Mammary epithelial cell (primary cell): ENCODE measurements at regions of chr1 and their contacts with region 1.

Region 1: GRCh38 chr1:41003640-41004220 is 17.8 kb downstream of the SLFNL1 start:
- DNase-seq: peak; percentile 97
- H3K4me3 ChIP-seq: no peak overlapping the region
- H3K27ac ChIP-seq: peak overlapping the region; percentile 38
- H3K4me1 ChIP-seq: peaks cover 49% of the 10 kb centered on the region
- H3K27me3 ChIP-seq: no peaks in the 10 kb centered on the region
- CTCF ChIP-seq: peak; percentile 57 to 74

Region 2: DNA sequence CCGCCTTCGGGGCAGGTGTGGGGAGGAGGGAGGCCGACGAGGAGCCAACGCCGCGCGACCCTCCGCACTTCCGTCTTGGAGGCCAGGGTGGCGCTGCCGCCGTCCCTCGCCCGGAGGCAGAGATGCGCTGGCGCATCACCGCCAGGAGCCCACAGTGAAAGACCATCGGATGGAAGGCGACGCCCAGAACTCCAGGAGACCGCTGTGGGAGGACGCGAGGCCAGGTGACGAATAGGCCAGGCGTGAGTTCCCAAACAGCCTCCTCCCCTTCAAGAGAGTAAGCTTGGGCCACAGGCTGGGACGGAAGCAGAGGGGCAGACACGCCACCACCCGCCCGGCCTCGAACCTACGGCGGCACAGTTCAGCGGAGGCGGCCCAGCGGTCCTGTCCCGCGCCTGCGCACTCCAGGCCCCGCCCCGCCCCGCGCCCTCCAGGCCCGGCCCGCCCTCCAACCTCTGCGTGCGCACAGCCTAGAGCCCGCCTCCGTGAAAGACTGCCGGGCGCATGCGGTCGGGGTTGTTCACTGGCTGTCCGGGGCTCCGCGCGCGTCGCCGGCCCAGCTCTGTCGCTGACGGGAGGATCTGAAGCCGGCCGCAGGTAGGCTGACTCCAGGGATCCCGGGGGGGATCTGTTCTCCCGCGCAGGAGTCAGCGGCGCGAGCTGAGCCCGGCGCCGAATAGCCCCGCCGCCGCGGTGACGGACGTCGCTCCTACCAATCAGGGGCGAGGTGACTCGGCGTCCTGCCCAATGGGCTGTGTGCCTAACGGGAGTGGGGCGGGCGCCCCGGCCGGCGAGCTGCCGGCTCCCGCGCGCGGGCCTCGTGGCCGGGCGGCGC is 24.3 kb before region 1 on chr1 and contains the start of gene CTPS1:
- CTCF ChIA-PET with region 1: no interaction called
- dilution Hi-C with region 1: no loop called
- in situ Hi-C with region 1: no loop called
- intact Hi-C with region 1: loop called (anchors 1 kb)
- DNase-seq: peak; percentile 93
- H3K4me3 ChIP-seq: peak within 1 kb of the TSS; percentile 80 to 96 (median 89)
- H3K27ac ChIP-seq: peak within 1 kb of the TSS; percentile 79
- H3K4me1 ChIP-seq: peaks cover 33% of the 10 kb centered on the region
- H3K27me3 ChIP-seq: no peaks in the 10 kb centered on the region
- CTCF ChIP-seq: no peak
- total RNA-seq, gene CTPS1: 24.0 to 80.2 TPM